CD8-positive, alpha-beta T cell (primary cell): ENCODE measurements at regions of chr3 and their contacts with region 1.

Region 1: DNA sequence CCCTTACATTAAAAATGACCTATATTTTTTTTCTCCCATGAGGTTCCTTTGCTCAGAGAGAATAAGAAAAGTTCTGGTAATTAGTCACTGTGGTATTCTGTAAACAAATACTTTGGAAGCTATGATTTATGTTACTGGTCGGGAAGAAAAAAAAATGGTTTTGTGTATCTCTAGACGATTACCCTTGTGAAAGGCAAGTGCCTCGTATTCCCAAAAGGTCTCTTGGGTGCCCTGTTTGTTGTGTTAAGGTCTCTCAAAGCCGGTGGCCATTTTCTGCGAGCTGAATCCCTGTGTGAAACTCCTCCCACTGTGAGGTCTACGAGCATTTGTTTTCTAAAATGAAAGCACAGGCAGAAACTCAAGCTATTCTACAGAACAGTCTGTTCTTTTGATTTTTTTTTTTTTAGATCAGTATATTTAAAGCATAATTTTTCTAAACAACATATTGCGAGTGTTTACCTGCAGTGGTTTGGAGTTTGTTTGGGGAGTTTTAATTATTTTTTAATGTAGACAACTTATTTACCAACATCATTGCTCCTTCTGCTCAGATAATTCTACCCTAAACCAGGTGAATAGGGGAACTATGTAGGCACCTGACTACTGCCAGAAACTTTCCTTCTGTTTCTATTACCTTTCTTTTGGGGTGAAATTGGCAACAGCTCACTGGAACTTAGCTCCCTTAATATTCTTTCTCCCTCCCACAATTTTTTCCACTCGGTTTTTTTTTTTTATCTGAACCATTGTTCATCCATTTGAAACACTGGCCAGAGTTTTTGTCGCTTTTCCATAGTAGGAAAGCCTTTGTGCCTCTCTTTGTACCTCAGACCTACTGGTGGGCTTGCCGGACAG is 44.0 kb downstream of the ZBTB38 start:
- DNase-seq: peak; percentile 27 to 88 (median 55)
- ATAC-seq: peak; percentile 64
- H3K4me3 ChIP-seq: peak overlapping the region; percentile 16 to 24
- H3K4me3 Mint-ChIP-seq: peak overlapping the region; percentile 84
- H3K27ac ChIP-seq: peak overlapping the region; percentile 61 to 80
- H3K27ac Mint-ChIP-seq: peak overlapping the region; percentile 99
- H3K4me1 ChIP-seq: peaks cover 78% of the 10 kb centered on the region
- H3K4me1 Mint-ChIP-seq: peaks cover 86% of the 10 kb centered on the region
- H3K27me3 ChIP-seq: no peaks in the 10 kb centered on the region
- H3K27me3 Mint-ChIP-seq: no peaks in the 10 kb centered on the region
- CTCF ChIP-seq: no peak

Region 2: GRCh38 chr3:141164852-141165251 is 247.5 kb before region 1 on chr3:
- CTCF ChIA-PET with region 1: no interaction called
- POLR2A ChIA-PET with region 1: no interaction called
- intact Hi-C with region 1: no loop called
- DNase-seq: no peak
- ATAC-seq: no peak
- H3K4me3 ChIP-seq: no peak overlapping the region
- H3K4me3 Mint-ChIP-seq: no peak overlapping the region
- H3K27ac ChIP-seq: no peak overlapping the region
- H3K27ac Mint-ChIP-seq: no peak overlapping the region
- H3K4me1 ChIP-seq: no peaks in the 10 kb centered on the region
- H3K4me1 Mint-ChIP-seq: no peaks in the 10 kb centered on the region
- H3K27me3 ChIP-seq: no peaks in the 10 kb centered on the region
- H3K27me3 Mint-ChIP-seq: peaks cover 2% of the 10 kb centered on the region
- CTCF ChIP-seq: no peak

Region 3: GRCh38 chr3:141370065-141370533 is 42.2 kb before region 1 on chr3:
- CTCF ChIA-PET with region 1: interaction called, 5 read pairs
- POLR2A ChIA-PET with region 1: interaction called, 4 read pairs
- intact Hi-C with region 1: loop called in 1 of 2 experiments (anchors 1 kb)
- DNase-seq: peak; percentile 15 to 94 (median 54)
- ATAC-seq: peak; percentile 100
- H3K4me3 ChIP-seq: no peak overlapping the region
- H3K4me3 Mint-ChIP-seq: no peak overlapping the region
- H3K27ac ChIP-seq: no peak overlapping the region
- H3K27ac Mint-ChIP-seq: no peak overlapping the region
- H3K4me1 ChIP-seq: no peaks in the 10 kb centered on the region
- H3K4me1 Mint-ChIP-seq: peaks cover 9% of the 10 kb centered on the region
- H3K27me3 ChIP-seq: no peaks in the 10 kb centered on the region
- H3K27me3 Mint-ChIP-seq: no peaks in the 10 kb centered on the region
- CTCF ChIP-seq: peak; percentile 62